Activated CD8-positive, alpha-beta memory T cell treated with anti-CD3 and anti-CD28 coated beads, Interleukin-2, amount 10 ng/mL, durations not matched to agents 7 days and 5 days (primary cell): ENCODE measurements at regions of chr11 and their contacts with region 1.

Region 1: GRCh38 chr11:45964911-45965389 is 42.5 kb downstream of the LARGE2 start:
- DNase-seq: peak; percentile 69
- ATAC-seq: peak; percentile 94
- H3K4me3 Mint-ChIP-seq: no peak overlapping the region
- H3K27ac Mint-ChIP-seq: no peak overlapping the region
- H3K4me1 Mint-ChIP-seq: no peaks in the 10 kb centered on the region
- H3K27me3 Mint-ChIP-seq: no peaks in the 10 kb centered on the region

Region 2: GRCh38 chr11:45930031-45930794 is 34.7 kb before region 1 on chr11:
- CTCF ChIA-PET with region 1: interaction called, 11 read pairs
- DNase-seq: peak; percentile 81
- ATAC-seq: peak; percentile 87
- H3K4me3 Mint-ChIP-seq: peak overlapping the region; percentile 43
- H3K27ac Mint-ChIP-seq: peak overlapping the region; percentile 90
- H3K4me1 Mint-ChIP-seq: peaks cover 31% of the 10 kb centered on the region
- H3K27me3 Mint-ChIP-seq: no peaks in the 10 kb centered on the region

Region 3: GRCh38 chr11:45982656-45983470 is 17.9 kb after region 1 on chr11:
- CTCF ChIA-PET with region 1: interaction called, 27 read pairs
- DNase-seq: no peak
- ATAC-seq: no peak
- H3K4me3 Mint-ChIP-seq: no peak overlapping the region
- H3K27ac Mint-ChIP-seq: no peak overlapping the region
- H3K4me1 Mint-ChIP-seq: peaks cover 13% of the 10 kb centered on the region
- H3K27me3 Mint-ChIP-seq: no peaks in the 10 kb centered on the region

Region 4: DNA sequence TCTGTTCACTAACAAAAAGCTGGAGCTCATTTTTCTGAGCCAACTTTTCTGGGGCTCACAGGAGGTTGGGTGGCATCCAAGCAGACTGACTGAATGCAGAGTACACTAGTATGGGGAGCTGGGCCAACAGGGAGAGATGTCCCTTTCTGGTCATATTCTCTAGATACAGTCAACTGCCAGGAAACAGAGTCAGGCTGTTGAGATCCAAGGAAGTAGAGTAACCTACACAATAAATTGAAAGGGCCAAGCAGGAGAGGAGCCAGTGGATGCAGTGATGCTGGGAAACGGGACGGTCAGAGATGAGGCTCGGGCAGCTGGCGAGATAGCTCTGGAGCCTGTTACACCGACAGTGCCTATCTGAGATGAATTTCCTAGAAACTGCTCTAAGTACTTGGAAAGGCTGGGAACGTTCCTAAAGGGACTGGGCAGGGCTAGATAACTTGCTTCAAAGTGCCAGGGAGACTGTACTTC is 28.6 kb after region 1 on chr11:
- CTCF ChIA-PET with region 1: interaction called, 10 read pairs
- DNase-seq: no peak
- ATAC-seq: no peak
- H3K4me3 Mint-ChIP-seq: no peak overlapping the region
- H3K27ac Mint-ChIP-seq: no peak overlapping the region
- H3K4me1 Mint-ChIP-seq: no peaks in the 10 kb centered on the region
- H3K27me3 Mint-ChIP-seq: no peaks in the 10 kb centered on the region

Region 5: DNA sequence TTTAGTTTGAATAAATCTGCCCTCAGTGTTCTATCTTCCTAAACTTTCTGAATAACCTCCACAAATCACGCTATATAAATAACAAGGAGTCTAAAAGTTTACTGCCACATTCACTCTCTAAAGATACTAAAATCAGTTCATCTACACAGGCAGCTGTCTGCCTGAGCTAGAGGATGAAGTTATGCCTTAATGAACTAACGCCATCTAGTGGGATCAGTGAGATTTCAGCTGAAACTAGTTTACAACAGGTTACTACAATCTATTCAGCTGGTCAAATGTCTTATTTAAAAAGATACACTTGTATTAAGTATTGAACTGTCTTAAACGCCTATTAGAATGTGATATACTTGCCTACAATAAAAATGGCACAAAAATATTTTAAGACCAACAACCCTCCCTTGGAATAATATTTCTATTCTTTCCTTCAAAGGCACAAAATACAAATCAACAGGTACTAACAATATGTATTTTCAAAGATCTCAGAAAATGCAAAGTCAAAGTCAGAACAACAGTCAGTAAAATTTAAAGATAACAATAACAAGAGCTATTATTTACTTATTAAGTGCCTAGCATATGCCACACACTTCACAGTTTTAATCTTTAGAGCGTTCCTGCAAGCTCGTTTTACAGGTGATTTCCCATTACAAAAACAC is 41.6 kb after region 1 on chr11:
- CTCF ChIA-PET with region 1: interaction called, 43 read pairs
- DNase-seq: no peak
- ATAC-seq: peak; percentile 90
- H3K4me3 Mint-ChIP-seq: no peak overlapping the region
- H3K27ac Mint-ChIP-seq: no peak overlapping the region
- H3K4me1 Mint-ChIP-seq: peaks cover 2% of the 10 kb centered on the region
- H3K27me3 Mint-ChIP-seq: no peaks in the 10 kb centered on the region

Region 6: DNA sequence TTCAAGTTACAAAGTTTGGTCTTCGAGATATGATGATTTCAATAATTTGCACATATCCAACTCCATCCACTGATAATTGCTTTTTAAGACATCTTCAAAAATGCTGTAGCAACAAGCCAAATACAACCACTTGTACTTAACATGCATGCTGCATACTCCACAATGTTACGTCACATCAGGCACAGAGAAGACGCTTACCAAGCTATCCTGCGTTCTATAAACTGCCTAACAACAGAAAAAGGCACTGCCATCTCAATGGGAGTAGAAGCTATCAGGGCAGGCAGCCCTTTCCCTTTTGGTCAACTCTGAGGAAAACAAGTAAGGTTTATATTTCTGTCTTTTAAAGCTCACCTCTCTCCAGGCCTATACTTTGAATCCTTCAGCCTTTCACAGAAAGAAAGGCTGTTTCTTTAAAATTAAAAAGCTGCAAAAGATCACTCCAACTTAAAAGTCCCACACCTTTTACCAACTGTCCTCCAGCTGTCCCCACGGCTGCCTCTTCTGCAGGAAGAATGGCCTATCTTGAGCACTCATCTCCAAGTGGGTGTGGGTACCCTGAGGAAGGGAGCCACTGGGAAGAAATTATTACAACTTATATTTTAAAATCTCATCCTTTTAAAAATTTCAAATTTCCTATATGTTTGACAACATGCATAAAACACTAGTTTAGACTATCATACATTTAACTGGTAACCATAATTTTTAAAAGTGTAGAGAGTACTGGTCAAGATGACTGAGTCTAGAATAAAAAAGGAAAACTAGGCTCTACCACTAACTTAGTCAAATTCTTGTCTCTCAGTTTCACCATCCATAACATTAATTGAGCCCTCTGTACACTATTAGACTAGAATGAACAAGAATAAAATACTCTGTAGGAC is 141.8 kb after region 1 on chr11:
- CTCF ChIA-PET with region 1: no interaction called
- DNase-seq: no peak
- ATAC-seq: no peak
- H3K4me3 Mint-ChIP-seq: no peak overlapping the region
- H3K27ac Mint-ChIP-seq: no peak overlapping the region
- H3K4me1 Mint-ChIP-seq: peaks cover 8% of the 10 kb centered on the region
- H3K27me3 Mint-ChIP-seq: no peaks in the 10 kb centered on the region

Region 7: GRCh38 chr11:46308631-46309419 is 343.9 kb after region 1 on chr11:
- CTCF ChIA-PET with region 1: interaction called, 22 read pairs
- DNase-seq: peak; percentile 80
- ATAC-seq: peak; percentile 85
- H3K4me3 Mint-ChIP-seq: no peak overlapping the region
- H3K27ac Mint-ChIP-seq: no peak overlapping the region
- H3K4me1 Mint-ChIP-seq: peaks cover 9% of the 10 kb centered on the region
- H3K27me3 Mint-ChIP-seq: peaks cover 5% of the 10 kb centered on the region